ENCODE measurements at regions of chr2 and their contacts with region 1.

Region 1: DNA sequence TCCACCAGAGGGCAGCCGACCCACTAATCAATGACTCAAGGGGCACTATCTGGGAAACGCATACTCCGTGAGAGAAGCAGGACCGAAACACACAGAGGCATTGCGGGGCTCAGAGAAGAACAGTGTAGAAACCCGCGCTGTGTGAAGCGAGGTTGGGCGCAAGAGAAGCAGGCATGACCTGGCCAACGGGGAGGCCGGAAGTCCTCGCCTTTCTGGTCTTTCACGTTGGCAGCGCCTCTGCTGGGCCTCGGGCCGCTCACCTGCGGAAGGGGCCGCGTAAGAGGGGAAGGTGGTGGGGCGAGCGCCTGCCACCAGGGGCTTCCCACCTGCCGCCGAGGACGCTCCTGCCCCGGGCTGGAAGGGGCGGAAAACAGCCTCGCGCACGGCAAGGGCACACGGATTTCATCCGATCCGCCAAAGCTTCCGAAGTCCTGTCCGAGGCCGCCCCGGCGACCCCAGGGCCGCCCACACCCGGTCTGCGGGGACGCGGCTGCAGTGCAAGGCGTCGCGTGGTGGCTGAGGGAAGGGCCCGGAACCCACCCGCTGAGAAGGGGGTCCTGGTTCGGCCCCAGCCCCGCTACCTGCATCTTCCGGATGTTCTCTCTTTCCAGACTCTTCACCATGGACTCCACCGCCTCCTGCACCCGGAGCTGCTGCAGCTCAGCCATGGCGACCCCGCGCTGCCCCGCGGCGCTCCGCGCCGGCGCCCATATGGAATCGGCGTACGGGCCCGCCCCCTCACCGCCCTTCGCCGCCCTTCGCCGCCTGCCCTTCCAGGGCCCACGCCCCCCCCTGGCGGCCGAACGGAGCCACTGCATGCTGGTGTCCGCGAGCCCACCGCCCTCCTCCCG is at the start of gene FAM136A:
- DNase-seq: peak; percentile 90
- H3K4me3 ChIP-seq: peak within 1 kb of the TSS; percentile 84
- H3K27ac ChIP-seq: peak within 1 kb of the TSS; percentile 54
- H3K4me1 ChIP-seq: peaks cover 8% of the 10 kb centered on the region
- CTCF ChIP-seq: peak; percentile 82
- total RNA-seq, gene FAM136A: 57.2 and 71.0 TPM in 2 replicates

Region 2: GRCh38 chr2:69724540-69725159 is 576.9 kb before region 1 on chr2:
- CTCF ChIA-PET with region 1: no interaction called
- POLR2A ChIA-PET with region 1: no interaction called
- intact Hi-C with region 1: loop called (anchors 10 kb)
- DNase-seq: peak; percentile 79
- H3K4me3 ChIP-seq: peak overlapping the region; percentile 54
- H3K27ac ChIP-seq: no peak overlapping the region
- H3K4me1 ChIP-seq: no peaks in the 10 kb centered on the region
- CTCF ChIP-seq: peak; percentile 91

Region 3: DNA sequence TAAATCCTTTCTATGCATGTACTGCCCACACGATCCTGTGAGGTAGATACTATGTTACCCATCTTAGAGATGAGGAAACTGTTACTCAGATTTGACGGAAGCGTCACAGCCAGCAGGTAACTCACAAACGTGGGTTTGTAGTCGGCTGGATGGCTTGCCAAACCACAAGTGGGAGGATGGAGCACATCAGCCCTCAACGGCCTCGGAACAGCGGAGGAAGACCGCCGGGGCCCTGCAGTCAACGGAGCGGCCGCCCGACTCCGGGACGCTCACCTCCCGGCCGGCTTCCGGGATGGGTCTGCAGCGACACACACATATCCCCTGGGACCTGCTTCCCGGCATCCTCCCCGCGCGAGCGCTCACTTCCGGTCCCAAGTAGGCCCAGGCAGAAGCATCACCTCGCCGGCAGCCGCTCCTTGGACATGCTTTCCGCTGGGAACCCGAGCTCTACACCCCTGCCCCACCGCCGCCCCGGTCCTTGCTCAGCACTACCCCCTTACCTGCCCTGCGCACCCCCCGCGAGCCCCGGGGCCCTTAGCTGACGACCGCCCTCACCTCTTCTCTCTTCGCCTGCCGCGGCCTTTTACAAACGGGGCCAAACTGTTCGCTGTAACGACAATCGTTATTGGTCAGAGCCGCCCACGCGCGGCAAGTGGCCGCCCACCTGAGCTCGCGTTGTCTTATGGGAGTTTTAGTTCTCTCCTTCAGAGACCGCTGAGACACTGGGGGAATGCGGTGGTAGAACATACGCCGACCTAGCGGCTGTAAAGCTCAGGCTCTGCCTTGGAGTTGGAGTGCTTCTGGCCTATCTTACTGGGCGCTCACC is 110.9 kb before region 1 on chr2 and contains the start of gene C2orf42:
- CTCF ChIA-PET with region 1: no interaction called
- POLR2A ChIA-PET with region 1: no interaction called
- intact Hi-C with region 1: loop called (anchors 2 kb)
- DNase-seq: peak; percentile 99
- H3K4me3 ChIP-seq: peak within 1 kb of the TSS; percentile 83
- H3K27ac ChIP-seq: peak within 1 kb of the TSS; percentile 89
- H3K4me1 ChIP-seq: peaks cover 8% of the 10 kb centered on the region
- CTCF ChIP-seq: no peak; the same call in 1 of the 2 replicates
- total RNA-seq, gene C2orf42: 24.5 and 26.8 TPM in 2 replicates

Region 4: GRCh38 chr2:70472221-70472890 is 170.8 kb after region 1 on chr2:
- CTCF ChIA-PET with region 1: no interaction called
- POLR2A ChIA-PET with region 1: no interaction called
- intact Hi-C with region 1: no loop called
- DNase-seq: no peak
- H3K4me3 ChIP-seq: no peak overlapping the region
- H3K27ac ChIP-seq: no peak overlapping the region
- H3K4me1 ChIP-seq: peaks cover 5% of the 10 kb centered on the region
- CTCF ChIP-seq: no peak

Region 5: DNA sequence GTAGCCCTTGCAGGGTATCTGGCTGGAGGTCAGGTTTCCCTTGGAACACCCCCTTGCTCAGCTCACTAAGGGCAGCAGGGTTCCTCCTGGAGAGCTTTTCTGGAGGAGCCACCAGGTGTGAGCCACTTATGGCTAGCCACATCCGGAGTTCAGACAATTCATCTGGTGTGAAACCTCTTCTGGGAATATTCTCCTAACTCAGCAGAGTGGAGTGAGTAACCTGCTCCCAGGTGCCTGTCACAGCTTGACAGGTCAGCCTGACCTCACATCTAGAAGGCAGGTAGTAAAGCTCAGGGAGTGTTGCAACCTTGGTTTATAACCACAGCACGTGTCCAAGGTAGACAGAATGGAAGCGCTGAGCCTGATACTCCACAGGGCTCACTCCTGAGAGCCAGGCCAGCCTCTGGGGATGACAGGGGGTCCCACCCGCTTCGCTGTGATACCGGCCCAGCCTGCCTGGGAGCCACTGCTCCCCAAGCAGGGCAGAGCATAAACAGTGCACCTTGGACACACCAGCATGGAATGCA is 314.7 kb after region 1 on chr2:
- CTCF ChIA-PET with region 1: interaction called, 8 read pairs
- POLR2A ChIA-PET with region 1: no interaction called
- intact Hi-C with region 1: loop called (anchors 1 kb)
- DNase-seq: no peak
- H3K4me3 ChIP-seq: no peak overlapping the region
- H3K27ac ChIP-seq: no peak overlapping the region
- H3K4me1 ChIP-seq: no peaks in the 10 kb centered on the region
- CTCF ChIP-seq: no peak

Region 6: DNA sequence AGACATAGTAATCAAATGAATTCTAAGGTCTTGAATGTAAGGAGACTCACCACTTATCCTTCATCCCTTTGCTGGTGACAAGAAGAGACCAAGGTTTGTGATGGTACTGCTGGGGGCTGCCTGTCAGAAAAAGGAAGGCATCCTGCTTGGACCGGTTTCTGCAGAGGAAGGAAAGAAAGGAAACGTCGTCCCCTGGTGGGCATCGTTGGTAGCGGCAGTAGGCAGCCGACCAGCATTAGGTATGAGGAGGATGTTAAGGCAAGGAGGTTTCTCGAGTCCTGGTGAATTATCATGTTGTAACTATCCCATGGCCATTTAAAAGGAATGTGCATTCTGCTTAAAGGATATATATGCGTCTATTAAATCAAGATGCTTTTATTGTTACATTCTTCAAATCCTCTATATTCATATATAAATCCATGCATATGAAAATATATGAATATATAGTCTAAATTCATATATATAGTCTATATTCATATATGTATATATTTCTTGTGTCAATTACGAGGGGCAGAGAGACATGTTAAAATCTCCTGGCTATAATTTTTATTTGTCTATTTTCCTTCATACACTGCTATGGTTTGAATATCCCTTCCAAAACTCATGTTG is 346.4 kb after region 1 on chr2:
- CTCF ChIA-PET with region 1: interaction called, 4 read pairs
- POLR2A ChIA-PET with region 1: no interaction called
- intact Hi-C with region 1: loop called (anchors 1 kb)
- DNase-seq: peak; percentile 55
- H3K4me3 ChIP-seq: no peak overlapping the region
- H3K27ac ChIP-seq: no peak overlapping the region
- H3K4me1 ChIP-seq: no peaks in the 10 kb centered on the region
- CTCF ChIP-seq: peak; percentile 95

Region 7: DNA sequence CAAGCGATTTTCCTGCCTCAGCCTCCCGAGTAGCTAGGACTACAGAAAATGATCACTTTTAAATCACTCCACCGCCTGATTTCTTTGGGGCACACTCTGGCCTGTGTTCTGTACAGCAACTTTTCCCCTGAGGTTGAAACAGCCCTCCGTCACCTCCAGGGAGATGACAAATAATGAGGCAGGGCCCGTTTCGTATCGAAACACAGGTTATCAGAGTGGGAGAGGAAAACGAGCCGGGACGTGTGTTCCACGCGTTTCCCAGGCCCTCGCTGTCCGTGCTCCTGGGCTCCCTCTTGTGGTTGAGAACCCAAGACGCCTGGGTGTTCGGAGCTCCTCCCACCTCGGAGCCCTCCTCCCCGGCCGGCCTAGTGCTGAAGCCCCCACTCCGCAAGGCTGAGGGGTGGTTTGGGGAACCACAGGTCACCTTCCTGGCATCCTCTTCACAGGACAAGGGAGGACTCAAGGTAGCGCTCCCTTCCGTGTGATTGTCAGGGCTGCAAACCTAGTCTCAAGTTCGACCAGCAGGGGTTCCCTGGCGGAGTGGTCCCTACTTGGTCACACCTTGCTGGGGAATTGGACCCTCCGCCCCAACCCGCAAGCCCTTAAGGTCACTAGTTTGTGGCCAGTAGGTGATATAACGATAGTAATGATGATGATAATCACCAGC is 646.9 kb after region 1 on chr2:
- CTCF ChIA-PET with region 1: no interaction called
- POLR2A ChIA-PET with region 1: no interaction called
- intact Hi-C with region 1: loop called (anchors 2 kb)
- DNase-seq: peak; percentile 79
- H3K4me3 ChIP-seq: peak overlapping the region; percentile 70
- H3K27ac ChIP-seq: no peak overlapping the region
- H3K4me1 ChIP-seq: peaks cover 20% of the 10 kb centered on the region
- CTCF ChIP-seq: peak; percentile 86

Measured in OCI-LY7 (cell line).